ENCODE measurements at regions of chr1 and their contacts with region 1.

Region 1: GRCh38 chr1:225474986-225475820 is 47.4 kb upstream of the LBR start:
- DNase-seq: peak; percentile 69
- ATAC-seq: peak; percentile 74
- H3K4me3 Mint-ChIP-seq: no peak overlapping the region
- H3K27ac Mint-ChIP-seq: no peak overlapping the region
- H3K4me1 Mint-ChIP-seq: peaks cover 51% of the 10 kb centered on the region
- H3K27me3 Mint-ChIP-seq: peaks cover 5% of the 10 kb centered on the region

Region 2: GRCh38 chr1:225329041-225329440 is 146.2 kb before region 1 on chr1:
- CTCF ChIA-PET with region 1: no interaction called
- POLR2A ChIA-PET with region 1: no interaction called
- DNase-seq: no peak
- ATAC-seq: no peak
- H3K4me3 Mint-ChIP-seq: no peak overlapping the region
- H3K27ac Mint-ChIP-seq: no peak overlapping the region
- H3K4me1 Mint-ChIP-seq: no peaks in the 10 kb centered on the region
- H3K27me3 Mint-ChIP-seq: peaks cover 2% of the 10 kb centered on the region

Region 3: DNA sequence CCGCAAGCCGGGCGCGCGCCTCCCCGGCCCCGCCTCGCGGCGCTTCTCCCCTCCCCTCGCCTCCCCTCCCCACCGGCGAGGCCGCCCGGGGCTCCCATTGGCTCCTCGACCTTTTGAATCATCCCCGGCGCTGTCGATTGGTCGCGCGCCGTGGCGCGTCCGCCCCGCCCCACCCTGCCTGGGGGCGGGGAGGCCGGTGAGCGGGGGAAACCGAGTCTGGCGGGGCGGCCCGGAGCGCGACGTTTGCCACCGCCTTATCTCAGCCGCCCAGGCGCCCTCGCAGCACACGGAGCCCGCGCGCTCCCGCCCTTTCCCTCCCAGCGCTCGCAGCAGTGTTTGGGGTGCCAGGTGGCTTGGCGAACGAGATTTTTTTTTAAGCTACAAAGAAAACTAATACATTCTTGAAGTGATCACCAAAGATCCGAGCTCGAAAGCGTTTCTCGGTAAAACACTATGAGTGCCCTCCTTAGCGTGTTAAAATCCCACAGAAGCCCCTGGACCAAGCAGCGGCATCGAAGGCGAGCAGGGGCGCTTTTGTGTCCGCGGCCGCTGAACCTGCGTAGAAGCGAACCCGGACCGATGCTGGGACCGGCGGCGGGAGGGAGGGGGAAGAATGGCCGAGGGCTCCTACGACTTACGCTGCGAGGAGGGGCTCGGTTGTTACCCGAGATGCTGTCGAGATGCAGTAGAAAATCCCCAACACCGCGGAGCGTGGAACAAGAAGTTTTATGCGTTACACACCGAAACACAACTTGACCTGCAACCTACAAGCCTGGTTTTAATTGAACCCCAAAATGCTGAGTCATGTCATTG is 46.9 kb before region 1 on chr1:
- CTCF ChIA-PET with region 1: interaction called, 28 read pairs
- POLR2A ChIA-PET with region 1: interaction called, 3 read pairs
- DNase-seq: peak; percentile 94
- ATAC-seq: peak; percentile 92
- H3K4me3 Mint-ChIP-seq: peak overlapping the region; percentile 90
- H3K27ac Mint-ChIP-seq: peak overlapping the region; percentile 95
- H3K4me1 Mint-ChIP-seq: peaks cover 48% of the 10 kb centered on the region
- H3K27me3 Mint-ChIP-seq: no peaks in the 10 kb centered on the region

Region 4: GRCh38 chr1:225488676-225489075 is 13.5 kb after region 1 on chr1:
- CTCF ChIA-PET with region 1: interaction called, 10 read pairs
- POLR2A ChIA-PET with region 1: no interaction called
- DNase-seq: no peak
- ATAC-seq: no peak
- H3K4me3 Mint-ChIP-seq: no peak overlapping the region
- H3K27ac Mint-ChIP-seq: no peak overlapping the region
- H3K4me1 Mint-ChIP-seq: no peaks in the 10 kb centered on the region
- H3K27me3 Mint-ChIP-seq: peaks cover 18% of the 10 kb centered on the region

Region 5: DNA sequence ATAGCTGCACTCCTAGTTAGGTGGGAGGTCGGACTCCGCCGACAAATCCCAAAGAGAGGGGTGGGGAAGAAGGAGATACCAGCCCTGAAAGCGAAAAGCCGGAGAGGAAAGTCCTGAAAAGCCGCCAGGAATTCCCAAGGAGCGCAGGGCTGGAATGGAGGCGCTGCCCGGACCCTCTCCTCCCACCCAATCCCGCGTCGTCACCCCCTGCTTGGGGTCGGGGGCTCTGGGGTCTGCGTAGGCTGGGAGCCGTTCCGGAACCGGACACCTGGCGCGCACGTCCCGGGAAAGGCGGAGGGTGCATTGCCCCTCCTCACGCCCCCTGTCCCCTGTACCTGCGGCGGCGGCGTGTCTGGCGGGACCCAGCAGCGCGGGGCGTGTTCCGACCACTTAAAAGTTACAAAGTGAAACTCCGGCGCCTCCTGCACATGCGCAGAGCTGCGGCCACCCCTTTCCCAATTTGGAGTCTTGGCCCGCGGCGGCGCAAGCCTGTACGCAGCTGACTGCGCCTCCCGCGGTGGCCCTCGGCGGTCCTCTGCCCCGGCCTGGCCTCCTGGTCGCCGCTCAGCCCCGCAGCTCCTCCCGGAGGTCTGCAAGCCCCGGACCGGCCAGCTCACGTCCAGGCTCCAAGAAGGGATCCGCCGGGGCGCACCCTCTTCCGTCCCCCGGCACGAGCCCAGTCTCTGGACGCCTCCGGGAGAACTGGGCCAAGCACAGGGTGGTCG is 406.9 kb after region 1 on chr1 and contains the start of gene TMEM63A:
- CTCF ChIA-PET with region 1: interaction called, 25 read pairs
- POLR2A ChIA-PET with region 1: no interaction called
- DNase-seq: peak; percentile 93
- ATAC-seq: peak; percentile 83
- H3K4me3 Mint-ChIP-seq: peak within 1 kb of the TSS; percentile 87
- H3K27ac Mint-ChIP-seq: peak within 1 kb of the TSS; percentile 92
- H3K4me1 Mint-ChIP-seq: peaks cover 56% of the 10 kb centered on the region
- H3K27me3 Mint-ChIP-seq: peaks cover 8% of the 10 kb centered on the region
- total RNA-seq, gene TMEM63A: 83.5 to 85.8 TPM

Region 6: GRCh38 chr1:225987491-225988316 is 512.5 kb after region 1 on chr1:
- CTCF ChIA-PET with region 1: interaction called, 14 read pairs
- POLR2A ChIA-PET with region 1: no interaction called
- DNase-seq: no peak
- ATAC-seq: no peak
- H3K4me3 Mint-ChIP-seq: no peak overlapping the region
- H3K27ac Mint-ChIP-seq: no peak overlapping the region
- H3K4me1 Mint-ChIP-seq: peaks cover 32% of the 10 kb centered on the region
- H3K27me3 Mint-ChIP-seq: no peaks in the 10 kb centered on the region

Measured in activated CD8-positive, alpha-beta T cell treated with anti-CD3 and anti-CD28 coated beads, Interleukin-2, amount 10 ng/mL, durations not matched to agents 7 days and 5 days (primary cell).